ENCODE measurements at regions of chr12 and their contacts with region 1.

Region 1: GRCh38 chr12:68040450-68041075 is 51.3 kb downstream of the IFNG-AS1 start:
- DNase-seq: peak; percentile 86
- ATAC-seq: peak; percentile 57
- H3K4me3 Mint-ChIP-seq: no peak overlapping the region
- H3K27ac Mint-ChIP-seq: peak overlapping the region; percentile 86
- H3K4me1 Mint-ChIP-seq: peaks cover 56% of the 10 kb centered on the region
- H3K27me3 Mint-ChIP-seq: no peaks in the 10 kb centered on the region
- CTCF ChIP-seq: peak; percentile 93

Region 2: GRCh38 chr12:68001486-68002466 is 38.8 kb before region 1 on chr12:
- CTCF ChIA-PET with region 1: interaction called, 17 read pairs
- POLR2A ChIA-PET with region 1: interaction called, 3 read pairs
- intact Hi-C with region 1: no loop called
- DNase-seq: no peak
- ATAC-seq: no peak
- H3K4me3 Mint-ChIP-seq: no peak overlapping the region
- H3K27ac Mint-ChIP-seq: peak overlapping the region; percentile 44
- H3K4me1 Mint-ChIP-seq: peaks cover 16% of the 10 kb centered on the region
- H3K27me3 Mint-ChIP-seq: no peaks in the 10 kb centered on the region
- CTCF ChIP-seq: peak; percentile 59

Region 3: DNA sequence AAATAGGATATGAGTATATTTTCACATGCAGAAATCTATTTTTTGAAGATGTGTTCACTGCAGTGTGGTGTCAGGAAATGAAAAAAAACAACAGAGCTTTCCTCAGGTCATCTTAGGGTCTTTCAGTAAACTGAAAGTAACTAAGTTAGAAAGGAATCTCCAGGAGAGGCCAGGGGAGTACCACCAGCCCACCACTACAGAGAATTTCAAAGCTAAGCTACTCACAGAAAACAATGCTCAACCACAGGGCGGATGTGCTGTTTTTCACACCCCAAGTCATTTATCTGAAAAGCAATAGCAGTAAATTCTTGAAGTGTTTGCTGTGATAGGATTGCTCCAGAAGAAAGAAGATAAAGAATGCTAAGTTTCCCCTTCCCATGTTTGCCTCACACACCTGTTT is 40.0 kb after region 1 on chr12:
- CTCF ChIA-PET with region 1: interaction called, 12 read pairs
- POLR2A ChIA-PET with region 1: no interaction called
- intact Hi-C with region 1: no loop called
- DNase-seq: peak; percentile 85
- ATAC-seq: peak; percentile 94
- H3K4me3 Mint-ChIP-seq: no peak overlapping the region
- H3K27ac Mint-ChIP-seq: peak overlapping the region; percentile 51
- H3K4me1 Mint-ChIP-seq: peaks cover 36% of the 10 kb centered on the region
- H3K27me3 Mint-ChIP-seq: no peaks in the 10 kb centered on the region
- CTCF ChIP-seq: no peak

Region 4: DNA sequence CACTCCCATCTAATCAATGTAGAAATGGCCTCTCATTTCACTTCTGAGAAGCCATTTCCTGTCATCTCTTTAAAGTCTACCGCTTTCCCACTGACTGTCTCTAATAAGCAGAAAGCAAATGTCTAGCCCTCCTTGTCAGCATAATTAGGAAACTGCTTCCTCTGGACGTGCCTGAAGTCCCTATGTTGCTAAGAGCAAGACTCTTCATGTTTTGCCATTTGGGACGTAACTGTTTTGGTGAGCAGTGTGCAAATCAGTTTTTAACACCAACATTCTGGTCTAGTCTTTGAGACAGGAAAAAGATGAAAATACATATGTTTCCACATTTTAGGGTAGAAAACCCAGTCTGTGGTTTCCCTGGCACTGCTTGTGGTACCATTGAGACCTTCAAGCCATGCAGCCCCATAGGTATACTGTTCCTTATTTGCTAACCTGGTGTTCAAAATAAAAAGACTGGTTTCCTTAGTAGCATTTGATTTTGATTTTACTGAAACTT is 96.8 kb after region 1 on chr12:
- CTCF ChIA-PET with region 1: interaction called, 19 read pairs
- POLR2A ChIA-PET with region 1: no interaction called
- intact Hi-C with region 1: no loop called
- DNase-seq: peak; percentile 52
- ATAC-seq: peak; percentile 75
- H3K4me3 Mint-ChIP-seq: peak overlapping the region; percentile 44
- H3K27ac Mint-ChIP-seq: peak overlapping the region; percentile 89
- H3K4me1 Mint-ChIP-seq: peaks cover 57% of the 10 kb centered on the region
- H3K27me3 Mint-ChIP-seq: no peaks in the 10 kb centered on the region
- CTCF ChIP-seq: no peak

Region 5: GRCh38 chr12:68180792-68181744 is 140.5 kb after region 1 on chr12:
- CTCF ChIA-PET with region 1: interaction called, 14 read pairs
- POLR2A ChIA-PET with region 1: no interaction called
- intact Hi-C with region 1: no loop called
- DNase-seq: peak; percentile 78
- ATAC-seq: peak; percentile 93
- H3K4me3 Mint-ChIP-seq: peak overlapping the region; percentile 28
- H3K27ac Mint-ChIP-seq: peak overlapping the region; percentile 82
- H3K4me1 Mint-ChIP-seq: peaks cover 62% of the 10 kb centered on the region
- H3K27me3 Mint-ChIP-seq: no peaks in the 10 kb centered on the region
- CTCF ChIP-seq: no peak

Region 6: GRCh38 chr12:68231229-68231628 is 190.7 kb after region 1 on chr12:
- CTCF ChIA-PET with region 1: interaction called, 10 read pairs
- POLR2A ChIA-PET with region 1: no interaction called
- intact Hi-C with region 1: no loop called
- DNase-seq: no peak
- ATAC-seq: peak; percentile 37
- H3K4me3 Mint-ChIP-seq: no peak overlapping the region
- H3K27ac Mint-ChIP-seq: no peak overlapping the region
- H3K4me1 Mint-ChIP-seq: peaks cover 17% of the 10 kb centered on the region
- H3K27me3 Mint-ChIP-seq: no peaks in the 10 kb centered on the region
- CTCF ChIP-seq: no peak

Measured in activated CD8-positive, alpha-beta T cell treated with anti-CD3 and anti-CD28 coated beads for 36 hours (primary cell).